Heart right ventricle (tissue), 16 donors: ENCODE measurements at regions of chr10 and their contacts with region 1.

Region 1: GRCh38 chr10:68988530-68989316 is at the start of gene KIFBP:
- DNase-seq: peak; percentile 84 to 96
- ATAC-seq: peak; percentile 95 to 98 (median 97)
- H3K4me3 ChIP-seq: peak within 1 kb of the TSS; percentile 76 to 98 (median 93)
- H3K27ac ChIP-seq: peak within 1 kb of the TSS; percentile 77 to 93 (median 89)
- H3K4me1 ChIP-seq: peaks cover 5 to 52% (median 48%) of the 10 kb centered on the region in 9 donors
- H3K27me3 ChIP-seq: no peaks in the 10 kb centered on the region
- CTCF ChIP-seq: peak in 8 of 9 donors; percentile 28 to 87 (median 59)
- total RNA-seq, gene KIFBP: 42.3 to 67.9 (median 53.2) TPM

Region 2: GRCh38 chr10:68938119-68938518 is 50.6 kb before region 1 on chr10:
- intact Hi-C with region 1: no loop called
- DNase-seq: no peak
- ATAC-seq: no peak
- H3K4me3 ChIP-seq: no peak overlapping the region
- H3K27ac ChIP-seq: no peak overlapping the region
- H3K4me1 ChIP-seq: no peaks in the 10 kb centered on the region
- H3K27me3 ChIP-seq: no peaks in the 10 kb centered on the region
- CTCF ChIP-seq: no peak

Region 3: DNA sequence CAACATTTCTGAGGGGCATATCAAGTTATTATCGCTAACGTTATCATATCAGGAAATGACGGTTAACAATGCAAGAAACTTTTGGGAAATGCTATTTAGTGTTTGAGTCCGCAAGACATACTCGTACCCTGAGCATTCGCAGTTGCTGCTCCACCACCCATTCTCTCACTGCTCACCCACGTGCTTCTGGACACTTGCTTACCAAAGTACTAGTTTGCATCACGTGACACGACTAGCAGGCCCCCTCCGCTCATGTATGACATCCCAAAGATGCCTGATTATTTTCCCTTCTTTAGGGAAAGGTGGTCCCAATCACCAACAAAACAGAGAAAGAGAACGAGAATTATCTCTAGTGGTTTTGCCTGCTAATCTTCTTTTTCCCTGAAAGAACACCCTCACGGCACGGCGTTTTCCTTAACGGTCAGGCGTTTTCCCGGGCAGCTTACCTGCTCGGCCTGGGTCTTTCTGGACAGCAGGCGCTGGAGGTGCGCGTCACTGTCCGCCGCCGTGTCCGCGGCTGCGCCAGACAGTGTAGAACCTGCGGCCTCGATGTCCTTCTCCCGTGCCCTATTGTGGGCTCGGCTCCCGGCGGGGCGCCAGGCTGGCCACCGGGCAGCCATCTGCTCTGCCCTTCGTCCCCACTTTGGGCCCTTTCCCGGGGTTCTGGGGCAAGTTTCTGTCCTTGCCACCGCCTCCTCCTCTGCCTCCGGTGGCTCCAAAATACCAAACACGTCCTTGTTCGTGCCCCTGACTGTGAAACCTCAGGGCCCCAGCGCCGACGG is 191.2 kb after region 1 on chr10 and contains the start of gene SUPV3L1:
- intact Hi-C with region 1: loop called in 1 of 10 experiments (anchors 10 kb)
- DNase-seq: peak; percentile 86 to 95
- ATAC-seq: peak; percentile 96 to 99 (median 97)
- H3K4me3 ChIP-seq: peak within 1 kb of the TSS; percentile 60 to 98 (median 85)
- H3K27ac ChIP-seq: peak within 1 kb of the TSS; percentile 80 to 95 (median 92)
- H3K4me1 ChIP-seq: peaks cover 0 to 36% (median 27%) of the 10 kb centered on the region in 9 donors
- H3K27me3 ChIP-seq: no peaks in the 10 kb centered on the region
- CTCF ChIP-seq: no peak
- total RNA-seq, gene SUPV3L1: 32.9 to 49.4 (median 38.0) TPM

Region 4: GRCh38 chr10:69290993-69291392 is 302.3 kb after region 1 on chr10:
- intact Hi-C with region 1: no loop called
- DNase-seq: no peak
- ATAC-seq: peak in 6 of 8 donors; percentile 29 to 75 (median 56)
- H3K4me3 ChIP-seq: no peak overlapping the region
- H3K27ac ChIP-seq: no peak overlapping the region
- H3K4me1 ChIP-seq: peaks cover 0 to 7% (median 0%) of the 10 kb centered on the region in 9 donors
- H3K27me3 ChIP-seq: no peaks in the 10 kb centered on the region
- CTCF ChIP-seq: no peak